ENCODE measurements at regions of chr16 and their contacts with region 1.

Region 1: GRCh38 chr16:24041826-24042631 is 206.2 kb downstream of the PRKCB start:
- DNase-seq: peak; percentile 82
- CTCF ChIP-seq: peak; percentile 63

Region 2: DNA sequence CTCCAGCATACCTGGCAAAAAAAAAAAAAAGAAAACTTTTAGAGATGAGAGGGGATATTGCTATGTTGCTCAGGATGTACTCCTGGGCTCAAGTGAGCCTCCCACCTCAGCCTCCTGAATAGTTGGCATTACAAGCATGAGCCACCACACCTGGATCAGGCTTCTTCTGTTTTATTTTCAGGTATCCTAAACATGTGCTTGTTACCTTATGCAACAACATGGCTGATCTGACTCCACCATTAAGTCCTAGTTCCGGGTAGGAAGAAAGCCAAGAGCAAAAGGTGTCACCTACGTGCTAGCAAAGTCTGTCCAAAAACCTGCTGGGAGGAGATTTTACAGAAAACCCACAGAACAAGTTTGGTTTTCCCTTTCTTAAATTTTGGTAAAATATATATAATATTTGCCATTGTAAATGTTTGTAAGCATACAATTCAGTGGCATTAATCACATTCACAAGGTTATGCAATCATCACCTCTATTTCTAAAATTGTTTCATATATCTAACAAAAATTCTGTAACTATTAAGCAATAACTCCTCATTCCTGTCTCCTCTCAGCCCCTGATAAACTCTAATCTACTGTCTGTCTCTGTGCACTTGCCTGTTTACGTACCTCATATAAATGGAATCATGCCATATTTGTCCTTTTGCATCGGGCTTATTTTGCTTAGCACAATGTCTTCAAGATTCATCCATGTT is 205.0 kb after region 1 on chr16:
- in situ Hi-C with region 1: loop called (anchors 10 kb)
- DNase-seq: no peak
- CTCF ChIP-seq: no peak

Region 3: DNA sequence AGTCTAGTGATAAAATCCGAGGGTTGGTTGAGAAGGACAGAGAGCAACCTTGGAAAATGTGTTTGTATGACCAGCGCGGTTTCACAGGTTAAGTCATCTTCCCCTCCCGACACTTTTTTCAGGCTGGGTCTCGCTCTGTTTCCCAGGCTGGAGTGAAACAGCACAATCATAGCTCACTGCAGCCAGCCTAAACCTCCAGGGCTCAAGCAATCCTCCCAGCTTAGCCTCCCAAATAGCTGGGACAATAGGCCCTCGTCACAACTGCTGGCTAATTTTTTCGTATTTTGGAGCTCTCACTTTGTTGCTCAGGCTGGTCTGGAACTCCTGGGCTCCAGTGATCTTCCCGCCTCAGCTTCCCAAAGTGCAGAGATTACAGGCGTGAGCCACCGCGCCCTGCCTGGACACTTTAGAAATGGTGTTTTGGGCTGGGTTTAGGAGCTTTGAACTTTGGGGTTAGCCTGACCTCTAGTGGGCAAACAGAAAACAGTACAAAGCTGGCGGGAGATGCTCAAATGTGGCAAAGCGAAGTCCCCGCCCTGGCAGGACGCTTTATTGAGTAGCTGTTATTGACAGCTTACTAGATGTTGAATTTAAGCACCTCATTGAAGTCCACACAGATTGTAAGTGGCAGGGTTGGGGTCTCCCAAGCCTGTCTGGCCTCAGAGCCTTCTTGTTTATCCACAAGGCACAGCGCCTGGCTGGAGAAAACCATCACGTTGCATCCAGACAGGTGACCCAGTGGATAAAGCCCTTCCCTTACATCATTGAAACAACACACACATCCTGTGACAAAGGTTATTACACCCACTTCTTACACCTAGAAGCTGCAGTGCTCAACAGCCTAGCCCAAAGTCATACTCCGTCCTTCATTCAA is 462.7 kb after region 1 on chr16:
- in situ Hi-C with region 1: loop called (anchors 10 kb)
- DNase-seq: peak; percentile 68
- CTCF ChIP-seq: peak; percentile 72

Measured in GM13976 (cell line).